SK-N-SH (cell line): ENCODE measurements at regions of chr4 and their contacts with region 1.

Region 1: GRCh38 chr4:4761128-4761982 is 98.1 kb upstream of the MSX1 start:
- DNase-seq: peak; percentile 43
- H3K4me3 ChIP-seq: no peak overlapping the region
- H3K27ac ChIP-seq: no peak overlapping the region
- H3K4me1 ChIP-seq: peaks cover 0 to 18% of the 10 kb centered on the region in 2 experiments; a peak in 1 of 4 replicates
- H3K27me3 ChIP-seq: 0 out of 2 replicates have a peak, but pooled peaks cover 5% of the 10 kb centered on the region
- CTCF ChIP-seq: no peak
- EP300 ChIP-seq: no peak
- RAD21 ChIP-seq: peak; percentile 28; the same call in 1 of the 2 replicates

Region 2: DNA sequence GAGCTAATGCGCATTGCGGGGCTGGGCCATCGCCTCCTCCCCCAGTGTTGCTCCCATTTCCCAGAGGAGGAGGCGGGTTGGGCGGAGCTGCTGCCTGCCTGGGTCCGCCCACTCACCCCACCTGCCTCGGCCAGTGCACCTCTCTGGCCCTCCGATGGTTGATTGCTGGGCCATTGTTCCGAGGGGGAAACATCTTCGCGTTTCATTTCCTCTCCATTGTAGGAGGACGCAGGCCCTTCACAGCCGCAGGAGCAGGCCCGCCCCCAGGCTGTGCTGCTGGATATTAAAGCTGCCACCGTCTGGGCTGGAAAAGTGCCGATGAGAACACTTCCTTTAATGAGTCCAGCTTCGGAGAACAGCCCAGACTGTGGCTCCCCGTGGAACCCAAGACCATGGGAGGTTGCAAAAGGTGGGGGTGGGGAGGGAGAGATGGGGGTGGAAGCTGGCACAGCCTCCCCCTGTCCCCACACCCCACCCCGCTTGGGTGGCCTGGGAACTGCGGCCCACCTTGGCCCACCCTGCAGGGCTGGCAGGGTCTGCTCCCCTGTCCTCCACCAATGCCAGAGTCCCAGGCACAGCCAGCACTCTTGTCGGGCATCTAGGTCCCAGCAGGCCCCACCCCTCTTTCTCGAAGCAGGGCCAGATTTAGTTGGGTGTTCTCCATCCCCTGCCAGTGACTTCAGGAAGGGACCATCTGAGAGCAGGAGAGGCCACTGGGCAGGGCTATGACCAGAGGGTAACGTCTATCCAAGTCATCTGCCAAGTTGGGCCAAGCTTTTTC is 898.5 kb before region 1 on chr4:
- CTCF ChIA-PET with region 1: no interaction called
- POLR2A ChIA-PET with region 1: no interaction called
- DNase-seq: no peak
- H3K4me3 ChIP-seq: no peak overlapping the region
- H3K27ac ChIP-seq: no peak overlapping the region
- H3K4me1 ChIP-seq: peaks cover 0 to 8% of the 10 kb centered on the region in 2 experiments; a peak in 1 of 4 replicates
- H3K27me3 ChIP-seq: no peaks in the 10 kb centered on the region
- CTCF ChIP-seq: no peak
- EP300 ChIP-seq: no peak
- RAD21 ChIP-seq: no peak

Region 3: GRCh38 chr4:4780729-4781244 is 19.4 kb after region 1 on chr4:
- CTCF ChIA-PET with region 1: interaction called, 10 read pairs
- POLR2A ChIA-PET with region 1: no interaction called
- DNase-seq: peak; percentile 69
- H3K4me3 ChIP-seq: no peak overlapping the region
- H3K27ac ChIP-seq: peak overlapping the region in 1 of 2 experiments; percentile 62; a peak in 1 of 4 replicates
- H3K4me1 ChIP-seq: peaks cover 0 to 33% of the 10 kb centered on the region in 2 experiments; a peak in 2 of 4 replicates
- H3K27me3 ChIP-seq: no peaks in the 10 kb centered on the region
- CTCF ChIP-seq: 0 out of 2 replicates have a peak, but pooled peaks have one; percentile 12
- EP300 ChIP-seq: peak in 1 of 2 experiments; percentile 83; a peak in 1 of 4 replicates
- RAD21 ChIP-seq: peak; percentile 64

Region 4: GRCh38 chr4:4858527-4859389 is 97.4 kb after region 1 on chr4:
- CTCF ChIA-PET with region 1: no interaction called
- POLR2A ChIA-PET with region 1: no interaction called
- DNase-seq: no peak
- H3K4me3 ChIP-seq: peak overlapping the region; percentile 47 to 63
- H3K27ac ChIP-seq: no peak overlapping the region
- H3K4me1 ChIP-seq: peaks cover 0 to 8% of the 10 kb centered on the region in 2 experiments; a peak in 1 of 4 replicates
- H3K27me3 ChIP-seq: peaks cover 78% of the 10 kb centered on the region
- CTCF ChIP-seq: no peak
- EP300 ChIP-seq: no peak
- RAD21 ChIP-seq: no peak

Region 5: DNA sequence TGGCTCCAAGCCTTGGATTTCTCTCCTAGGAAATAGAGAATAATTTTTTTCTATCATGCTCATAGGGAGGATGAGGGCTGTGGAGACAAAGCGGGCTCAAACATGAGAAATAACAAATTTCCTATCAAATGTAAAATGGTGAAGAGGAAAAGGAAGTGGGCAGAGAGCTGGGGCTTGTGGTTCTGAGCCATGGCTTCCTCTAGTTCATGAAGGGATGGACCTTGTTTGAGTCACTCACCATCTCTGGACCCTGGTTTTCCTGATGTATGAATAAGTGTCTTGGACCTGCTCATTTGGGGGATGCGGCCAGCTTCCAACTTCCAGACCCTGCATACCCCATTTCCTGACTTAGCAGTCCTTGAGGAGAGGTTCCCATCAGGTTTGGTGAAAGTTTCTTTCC is 161.1 kb after region 1 on chr4:
- CTCF ChIA-PET with region 1: no interaction called
- POLR2A ChIA-PET with region 1: no interaction called
- DNase-seq: no peak
- H3K4me3 ChIP-seq: no peak overlapping the region
- H3K27ac ChIP-seq: no peak overlapping the region
- H3K4me1 ChIP-seq: no peaks in the 10 kb centered on the region
- H3K27me3 ChIP-seq: no peaks in the 10 kb centered on the region
- CTCF ChIP-seq: no peak
- EP300 ChIP-seq: no peak
- RAD21 ChIP-seq: no peak